Pancreas (tissue), 10 donors: ENCODE measurements at regions of chr12 and their contacts with region 1.

Region 1: GRCh38 chr12:122123051-122123760 is 44.6 kb downstream of the MLXIP start:
- DNase-seq: peak; percentile 58 to 78 (median 64)
- ATAC-seq: peak; percentile 55 to 80 (median 76)
- H3K4me3 ChIP-seq: no peak overlapping the region
- H3K27ac ChIP-seq: peak overlapping the region in 2 of 4 donors; percentile 29 to 44
- H3K4me1 ChIP-seq: peaks cover 0 to 9% (median 4%) of the 10 kb centered on the region in 3 donors
- H3K27me3 ChIP-seq: no peaks in the 10 kb centered on the region
- CTCF ChIP-seq: peak; percentile 36 to 66 (median 54)

Region 2: DNA sequence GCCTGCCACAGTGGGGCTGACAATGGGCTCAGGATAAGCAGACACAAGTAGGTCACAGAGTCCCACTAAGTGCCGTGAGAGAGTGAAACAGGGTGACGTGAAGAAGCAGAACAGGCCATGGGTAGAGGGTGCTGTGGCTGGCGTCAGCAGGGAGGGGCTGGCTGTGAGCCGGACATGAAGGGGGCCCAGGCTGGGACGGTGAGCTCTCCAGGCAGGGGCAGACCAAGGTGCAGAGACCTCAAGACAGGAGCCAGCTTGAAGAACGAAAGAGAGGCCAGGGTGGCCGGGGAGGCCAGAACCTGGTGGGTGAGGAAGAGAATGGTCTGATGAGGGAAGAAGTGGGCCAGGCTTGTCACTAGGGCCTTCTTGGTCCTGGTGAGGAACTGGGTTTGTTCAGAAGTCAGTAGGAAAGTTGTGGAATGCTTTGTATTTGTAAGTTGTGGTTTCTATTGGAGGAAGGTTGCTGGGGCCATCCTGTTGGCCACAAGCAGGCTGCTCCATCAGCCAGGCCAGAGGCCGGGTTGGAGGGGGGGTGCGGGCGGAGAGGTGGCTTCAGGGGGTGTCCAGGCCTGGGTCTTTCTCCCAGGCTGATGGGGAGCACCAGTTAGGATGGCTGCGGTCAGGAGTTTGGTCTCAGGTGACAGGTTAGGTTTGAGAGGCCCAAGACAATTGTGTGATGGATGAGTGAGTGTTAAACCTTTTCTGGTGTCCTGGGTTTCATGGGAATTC is 66.0 kb before region 1 on chr12:
- intact Hi-C with region 1: loop called (anchors 2 to 5 kb)
- DNase-seq: no peak
- ATAC-seq: no peak
- H3K4me3 ChIP-seq: no peak overlapping the region
- H3K27ac ChIP-seq: no peak overlapping the region
- H3K4me1 ChIP-seq: peaks cover 3 to 13% (median 5%) of the 10 kb centered on the region in 3 donors
- H3K27me3 ChIP-seq: no peaks in the 10 kb centered on the region
- CTCF ChIP-seq: no peak

Region 3: DNA sequence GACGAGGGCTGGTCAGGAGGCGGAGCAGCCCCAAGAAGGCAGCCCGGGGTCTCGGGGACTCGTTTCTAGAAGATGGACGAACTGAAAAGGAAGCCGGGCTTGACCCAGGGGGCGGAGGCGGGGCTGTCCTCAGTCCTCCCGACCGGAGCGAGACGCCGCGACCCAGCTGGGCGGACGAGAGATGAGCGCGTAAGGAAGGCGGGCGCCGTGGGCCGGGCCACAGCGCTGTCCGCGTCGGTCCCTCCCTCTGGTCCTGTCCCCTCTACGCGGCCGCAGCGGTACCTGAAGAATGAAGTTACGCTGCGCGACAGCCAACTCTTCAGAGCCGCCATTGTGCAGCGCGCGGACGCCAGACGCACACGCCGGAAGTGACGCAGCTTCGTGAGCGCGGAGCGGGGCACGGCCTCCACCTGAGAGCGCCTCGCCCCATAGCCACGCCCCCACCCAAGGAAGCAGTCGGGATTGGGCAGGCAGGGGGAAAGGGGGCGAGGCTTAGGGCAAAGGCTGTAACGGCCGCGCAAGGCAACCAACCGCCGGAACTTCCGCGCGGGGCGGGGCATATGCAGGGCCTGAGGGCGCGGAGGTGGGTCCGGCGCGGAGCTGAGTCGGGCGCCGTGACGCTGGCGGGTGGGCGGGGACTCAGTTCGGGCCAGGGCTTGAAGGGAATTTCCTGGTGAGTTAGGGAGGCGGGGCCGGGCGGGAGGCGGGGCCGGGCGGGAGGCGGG is 102.6 kb after region 1 on chr12 and contains the start of gene DIABLO:
- intact Hi-C with region 1: no loop called
- DNase-seq: peak; percentile 99 to 100 (median 100)
- ATAC-seq: peak; percentile 94 to 97 (median 95)
- H3K4me3 ChIP-seq: peak within 1 kb of the TSS; percentile 88 to 99 (median 90)
- H3K27ac ChIP-seq: peak within 1 kb of the TSS; percentile 87 to 94 (median 92)
- H3K4me1 ChIP-seq: peaks cover 9 to 21% (median 15%) of the 10 kb centered on the region in 3 donors
- H3K27me3 ChIP-seq: no peaks in the 10 kb centered on the region
- CTCF ChIP-seq: no peak
- total RNA-seq, gene DIABLO: 13.2 to 20.6 (median 18.0) TPM